Head of caudate nucleus (tissue), 42 donors: ENCODE measurements at regions of chr11 and their contacts with region 1.

Region 1: GRCh38 chr11:33736148-33736809 is at the start of gene CD59:
- DNase-seq: peak; percentile 83 to 98 (median 96)

Region 2: DNA sequence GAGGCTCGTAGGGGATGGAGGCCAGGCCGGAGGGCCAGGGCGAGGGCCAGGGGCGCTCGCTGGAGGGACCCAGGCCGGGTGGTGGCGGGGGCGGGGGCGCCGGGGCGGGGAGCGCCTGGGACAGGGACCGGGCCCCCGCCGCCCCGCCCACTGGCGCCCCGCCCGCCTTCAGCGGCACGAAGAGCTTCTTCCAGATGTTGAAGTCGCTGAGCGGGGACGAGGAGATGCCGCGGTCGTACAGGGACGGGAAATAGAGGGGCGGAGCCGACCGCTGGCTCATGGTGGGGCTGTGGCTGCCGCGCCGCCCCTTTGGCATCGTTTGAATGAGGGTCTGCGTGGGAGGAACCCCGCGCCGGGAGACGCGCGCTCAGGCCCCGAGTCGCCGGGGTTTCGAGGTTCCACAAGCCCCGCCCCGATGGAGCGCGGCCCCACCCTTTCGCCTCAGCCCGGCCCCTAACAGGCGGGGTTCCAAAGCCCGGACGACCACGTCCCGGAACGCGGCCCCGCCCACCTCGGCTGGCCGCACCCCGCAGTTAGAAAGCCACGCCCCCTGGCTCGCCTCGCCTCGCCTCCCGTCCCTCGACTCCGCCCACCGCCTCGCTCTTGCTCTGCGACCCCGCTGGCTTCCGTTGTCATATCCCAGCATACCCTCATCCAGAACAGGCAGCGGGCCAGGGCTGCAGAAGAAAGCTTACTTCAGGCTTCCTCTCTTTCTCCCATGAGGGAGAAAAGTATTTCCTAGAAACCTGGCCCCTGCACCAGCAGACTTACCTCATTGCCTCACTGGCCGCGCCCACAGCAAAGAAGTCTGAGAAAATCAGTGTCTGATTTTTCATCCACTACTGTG is 35.6 kb before region 1 on chr11 and contains the start of gene C11orf91:
- intact Hi-C with region 1: loop called (anchors 5 kb)
- DNase-seq: peak; percentile 82 to 99 (median 96)

Region 3: GRCh38 chr11:33773987-33774735 is 37.9 kb after region 1 on chr11 and contains the start of gene FBXO3:
- intact Hi-C with region 1: loop called (anchors 5 kb)
- DNase-seq: peak; percentile 70 to 95 (median 88)